ENCODE measurements at regions of chr4 and their contacts with region 1.

Region 1: GRCh38 chr4:123418351-123418931 is 21.8 kb downstream of the SPRY1 start:
- DNase-seq: peak; percentile 88
- ATAC-seq: peak; percentile 83
- H3K4me3 ChIP-seq: peak overlapping the region; percentile 33; the same call in 1 of the 2 replicates
- H3K27ac ChIP-seq: peak overlapping the region; percentile 95
- H3K4me1 ChIP-seq: peaks cover 68% of the 10 kb centered on the region
- H3K27me3 ChIP-seq: no peaks in the 10 kb centered on the region
- CTCF ChIP-seq: no peak

Region 2: DNA sequence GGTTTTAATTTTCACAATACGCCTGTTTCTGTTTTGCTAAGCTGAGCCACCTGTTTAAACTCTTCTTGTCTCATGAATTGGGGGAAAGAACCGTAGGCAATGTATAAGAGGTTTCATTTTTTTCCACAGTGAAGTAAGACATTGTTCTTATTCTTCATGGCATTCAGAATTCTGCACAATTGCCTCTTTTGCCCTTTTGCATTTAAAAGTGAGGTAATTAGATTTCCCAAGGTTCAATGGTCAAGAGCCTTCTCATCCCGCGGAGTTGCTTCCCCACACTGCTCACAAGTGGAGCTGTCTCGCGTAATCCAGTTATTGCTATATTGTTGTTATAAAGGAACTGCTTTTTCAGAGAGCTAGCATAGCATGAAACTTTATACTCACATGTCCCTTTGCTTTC is 112.7 kb before region 1 on chr4:
- CTCF ChIA-PET with region 1: no interaction called
- POLR2A ChIA-PET with region 1: no interaction called
- intact Hi-C with region 1: no loop called
- DNase-seq: no peak
- ATAC-seq: no peak
- H3K4me3 ChIP-seq: no peak overlapping the region
- H3K27ac ChIP-seq: no peak overlapping the region
- H3K4me1 ChIP-seq: no peaks in the 10 kb centered on the region
- H3K27me3 ChIP-seq: no peaks in the 10 kb centered on the region
- CTCF ChIP-seq: no peak

Region 3: DNA sequence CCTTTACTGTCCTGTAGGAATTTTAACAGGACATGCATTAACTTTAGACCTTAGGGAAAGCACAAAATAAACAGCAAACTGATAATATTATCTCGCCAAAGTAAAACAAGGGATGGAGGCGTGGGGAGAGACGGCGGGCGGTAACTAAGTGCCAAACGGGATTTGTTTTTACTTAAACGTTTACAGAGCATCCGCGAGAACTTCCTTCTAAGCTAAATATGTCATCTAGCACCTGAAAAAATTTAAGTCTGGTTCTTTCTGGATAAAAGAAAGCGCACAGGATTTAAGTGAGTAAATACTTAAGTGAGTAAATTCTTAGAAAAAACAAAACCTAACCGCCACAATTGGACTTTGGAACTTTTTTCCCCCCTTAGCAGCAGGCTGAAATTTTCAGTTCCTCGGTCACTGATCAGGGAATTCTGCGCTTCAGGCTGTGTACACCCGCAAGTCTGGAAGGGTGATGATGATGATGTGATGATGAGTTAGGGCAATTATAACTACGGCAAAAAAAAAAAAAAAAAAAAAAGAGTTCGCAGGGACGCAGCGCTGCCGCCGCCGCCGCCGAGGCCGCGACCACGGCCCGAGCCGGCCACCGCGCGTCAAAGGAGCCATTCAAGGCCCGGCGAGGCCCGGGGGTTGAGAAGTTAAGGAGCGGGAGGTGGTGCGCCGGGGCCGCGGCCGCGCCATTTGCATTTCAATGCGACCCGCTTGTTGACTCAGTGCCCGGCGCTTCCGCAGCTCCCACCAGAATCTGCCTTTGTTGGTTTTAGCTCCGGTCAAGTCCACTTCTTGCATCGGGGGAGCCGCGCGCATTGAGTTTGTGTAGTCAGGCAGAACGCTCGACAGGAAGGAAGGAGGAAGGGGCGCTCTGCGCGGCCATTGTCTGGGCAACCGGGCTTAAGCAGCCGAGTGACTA is 86.9 kb after region 1 on chr4:
- CTCF ChIA-PET with region 1: no interaction called
- POLR2A ChIA-PET with region 1: no interaction called
- intact Hi-C with region 1: loop called (anchors 2 kb)
- DNase-seq: peak; percentile 41
- ATAC-seq: peak; percentile 66
- H3K4me3 ChIP-seq: peak overlapping the region; percentile 71
- H3K27ac ChIP-seq: peak overlapping the region; percentile 49
- H3K4me1 ChIP-seq: peaks cover 10% of the 10 kb centered on the region
- H3K27me3 ChIP-seq: no peaks in the 10 kb centered on the region
- CTCF ChIP-seq: no peak

Measured in PC-3 (cell line).